Aorta (tissue), 5 donors: ENCODE measurements at regions of chr14 and their contacts with region 1.

Region 1: DNA sequence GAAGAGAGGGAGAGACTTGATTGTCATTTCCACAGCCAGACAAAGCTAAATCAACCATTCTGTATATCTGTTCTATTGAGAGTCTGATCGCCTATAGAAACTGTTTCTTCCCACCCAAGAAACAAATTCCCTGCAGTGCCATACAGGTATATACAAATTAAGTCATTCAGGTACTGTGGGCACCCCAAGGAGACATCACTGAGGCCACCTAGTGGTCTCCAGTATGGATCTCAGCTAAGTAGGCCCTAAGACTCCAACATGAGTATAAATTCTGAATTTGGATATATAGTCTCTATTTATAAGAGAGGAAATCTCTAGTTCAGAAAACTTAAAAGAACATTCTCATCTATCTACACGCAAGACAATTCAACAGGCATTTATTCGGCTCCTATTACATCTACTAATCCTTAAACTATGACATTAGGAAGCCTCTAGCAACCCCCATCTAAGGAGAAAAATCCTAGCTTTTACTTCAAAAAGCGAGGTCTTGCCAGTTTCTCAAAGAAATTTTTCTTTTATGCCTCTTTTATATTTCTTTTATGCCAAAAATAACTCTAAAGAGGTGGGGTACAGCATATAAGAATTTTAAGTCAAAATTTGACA is 62.6 kb downstream of the DCAF5 start:
- DNase-seq: no peak
- ATAC-seq: peak; percentile 63
- H3K4me3 ChIP-seq: no peak overlapping the region
- H3K27ac ChIP-seq: peak overlapping the region in 1 of 2 donors; percentile 28
- H3K4me1 ChIP-seq: peaks cover 3 to 4% of the 10 kb centered on the region in 2 donors
- H3K27me3 ChIP-seq: no peaks in the 10 kb centered on the region

Region 2: GRCh38 chr14:68905107-68905895 is 185.0 kb before region 1 on chr14:
- intact Hi-C with region 1: loop called in 1 of 2 experiments (anchors 5 kb)
- DNase-seq: peak in 1 of 2 donors; percentile 21
- ATAC-seq: no peak
- H3K4me3 ChIP-seq: no peak overlapping the region
- H3K27ac ChIP-seq: peak overlapping the region in 1 of 2 donors; percentile 30
- H3K4me1 ChIP-seq: no peaks in the 10 kb centered on the region
- H3K27me3 ChIP-seq: no peaks in the 10 kb centered on the region

Region 3: GRCh38 chr14:69615496-69616407 is 525.5 kb after region 1 on chr14:
- intact Hi-C with region 1: no loop called
- DNase-seq: peak in 1 of 2 donors; percentile 68
- ATAC-seq: peak; percentile 27
- H3K4me3 ChIP-seq: no peak overlapping the region
- H3K27ac ChIP-seq: peak overlapping the region; percentile 4 to 87
- H3K4me1 ChIP-seq: peaks cover 4 to 13% of the 10 kb centered on the region in 2 donors
- H3K27me3 ChIP-seq: no peaks in the 10 kb centered on the region